ENCODE measurements at regions of chr1 and their contacts with region 1.

Region 1: GRCh38 chr1:59393211-59394180 is 96.6 kb downstream of the FGGY start:
- DNase-seq: no peak

Region 2: DNA sequence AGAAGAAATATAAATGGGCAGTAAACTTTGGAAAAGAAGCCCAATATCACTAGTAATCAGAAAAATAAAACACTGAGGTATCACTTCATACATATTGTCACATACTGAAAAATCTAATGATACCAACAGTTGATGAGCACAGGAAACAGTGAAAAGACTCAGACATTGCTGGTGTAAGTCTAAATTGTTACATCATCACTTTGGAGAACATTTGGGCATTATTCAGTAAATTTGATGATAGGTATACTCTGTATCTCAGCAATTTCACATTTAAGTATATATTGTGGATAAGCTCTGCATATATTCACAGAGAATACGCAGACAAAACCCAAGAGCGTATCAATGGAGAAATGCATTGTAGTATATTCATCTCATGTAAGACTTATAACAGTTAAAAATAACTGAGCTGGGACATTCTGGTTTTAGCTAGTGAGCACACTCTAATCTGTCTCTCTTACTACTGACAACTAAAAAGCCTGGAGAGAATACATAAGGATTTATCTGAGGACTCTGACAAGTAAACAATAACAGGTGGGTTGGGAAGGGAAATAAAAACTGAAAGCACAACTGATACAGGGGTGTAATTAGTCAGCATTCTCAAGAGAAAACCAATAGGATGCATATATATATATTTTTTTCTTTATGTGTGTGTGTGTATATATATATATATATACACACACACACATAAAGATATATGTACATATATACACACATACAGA is 397.0 kb before region 1 on chr1:
- intact Hi-C with region 1: no loop called
- DNase-seq: no peak

Region 3: DNA sequence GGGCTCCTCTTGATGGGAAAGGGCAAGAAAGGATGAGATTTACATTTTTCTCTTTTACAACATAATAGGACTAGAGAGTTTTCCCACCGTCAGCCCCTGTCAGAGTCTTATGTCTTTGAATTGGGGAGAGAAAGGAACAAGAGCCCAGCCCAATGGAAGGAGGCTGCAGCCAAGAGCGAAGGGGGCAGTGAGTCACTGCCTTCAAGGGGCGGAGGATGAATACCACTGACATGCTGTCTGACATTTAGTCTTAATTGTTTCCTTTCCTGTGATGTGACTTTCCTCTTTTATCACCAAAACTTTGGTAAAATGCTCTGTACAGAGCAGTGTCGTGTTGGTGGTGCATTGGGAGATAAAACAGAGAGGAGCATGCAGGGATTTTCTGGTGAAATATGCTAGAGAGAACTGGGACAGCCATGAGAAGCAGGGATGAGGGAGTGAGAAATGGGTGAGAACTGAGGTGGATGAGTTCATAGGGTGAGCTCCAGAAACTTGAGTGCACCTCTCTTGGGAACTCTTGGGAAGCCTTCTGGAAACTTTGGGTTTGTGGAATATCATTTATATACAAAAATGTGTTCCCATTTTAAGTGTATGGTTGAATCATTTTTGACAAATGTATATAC is 276.5 kb before region 1 on chr1:
- intact Hi-C with region 1: no loop called
- DNase-seq: no peak

Region 4: GRCh38 chr1:59150577-59151391 is 242.7 kb before region 1 on chr1:
- intact Hi-C with region 1: loop called (anchors 5 kb)
- DNase-seq: peak; percentile 89

Region 5: GRCh38 chr1:59560807-59561450 is 167.4 kb after region 1 on chr1:
- intact Hi-C with region 1: loop called (anchors 10 kb)
- DNase-seq: no peak

Measured in cardiac septum (tissue), 1 donor.